AG04450 (cell line): ENCODE measurements at regions of chr6 and their contacts with region 1.

Region 1: GRCh38 chr6:126361832-126362412 is 22.0 kb downstream of the CENPW start:
- DNase-seq: no peak
- H3K4me3 ChIP-seq: no peak overlapping the region
- H3K27ac ChIP-seq: no peak overlapping the region
- H3K27me3 ChIP-seq: no peaks in the 10 kb centered on the region
- CTCF ChIP-seq: no peak

Region 2: DNA sequence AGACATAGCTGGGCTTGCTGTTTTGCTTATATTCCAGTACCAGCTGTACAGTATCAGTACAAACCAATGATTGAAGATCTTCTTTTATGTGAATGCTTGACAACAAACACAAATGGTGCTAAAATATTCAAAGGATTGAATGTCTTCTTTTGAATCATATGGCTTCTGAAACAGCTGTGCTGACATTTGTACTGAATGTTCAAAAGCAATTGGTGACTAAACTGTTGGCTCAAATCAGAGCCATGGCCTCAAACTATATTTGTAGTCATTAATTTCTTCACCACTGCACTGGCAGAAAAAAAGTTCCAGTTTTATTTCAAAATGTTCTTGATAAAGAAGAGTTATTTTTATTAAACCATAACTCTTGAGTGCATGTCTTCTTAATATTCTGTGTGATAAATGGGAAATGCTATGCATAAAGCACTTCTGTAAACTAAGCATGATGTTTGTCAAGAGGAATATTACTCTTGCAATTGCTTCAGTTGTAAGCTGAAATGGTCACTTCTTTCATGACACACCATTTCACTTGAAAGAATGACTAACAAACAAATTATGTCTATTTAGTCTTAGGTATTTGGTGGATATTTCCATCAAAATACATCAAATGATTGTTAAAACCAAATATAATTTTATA is 67.9 kb before region 1 on chr6:
- CTCF ChIA-PET with region 1: no interaction called
- POLR2A ChIA-PET with region 1: no interaction called
- DNase-seq: no peak
- H3K4me3 ChIP-seq: no peak overlapping the region
- H3K27ac ChIP-seq: no peak overlapping the region
- H3K27me3 ChIP-seq: no peaks in the 10 kb centered on the region
- CTCF ChIP-seq: no peak

Region 3: GRCh38 chr6:126339796-126340609 is 21.9 kb before region 1 on chr6 and contains the start of gene CENPW:
- CTCF ChIA-PET with region 1: interaction called, 24 read pairs
- POLR2A ChIA-PET with region 1: no interaction called
- DNase-seq: peak; percentile 57
- H3K4me3 ChIP-seq: peak within 1 kb of the TSS; percentile 97
- H3K27ac ChIP-seq: peak within 1 kb of the TSS; percentile 12
- H3K27me3 ChIP-seq: peaks cover 5% of the 10 kb centered on the region
- CTCF ChIP-seq: no peak
- polyA plus RNA-seq, gene CENPW: 6.7 and 10.6 TPM in 2 replicates

Region 4: DNA sequence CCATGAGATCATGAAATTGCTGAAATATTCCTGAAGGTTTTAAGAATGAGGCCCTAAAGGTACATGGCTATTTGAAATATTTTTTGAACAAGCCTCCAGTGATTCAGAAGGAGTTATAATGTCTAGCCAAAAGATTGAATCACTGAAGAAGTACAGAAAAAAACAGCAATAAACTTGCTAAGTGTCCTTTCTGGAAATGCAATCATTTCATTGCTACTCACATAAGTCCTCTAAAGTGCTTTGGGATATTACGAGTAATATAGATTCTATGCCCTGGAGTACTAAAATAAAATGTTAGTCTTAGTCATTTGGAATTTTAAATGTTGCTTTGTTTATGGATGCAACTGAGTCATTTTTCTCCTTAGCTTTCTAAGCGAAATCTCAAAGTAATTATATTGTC is 10.7 kb after region 1 on chr6:
- CTCF ChIA-PET with region 1: interaction called, 11 read pairs
- POLR2A ChIA-PET with region 1: no interaction called
- DNase-seq: no peak
- H3K4me3 ChIP-seq: no peak overlapping the region
- H3K27ac ChIP-seq: no peak overlapping the region
- H3K27me3 ChIP-seq: no peaks in the 10 kb centered on the region
- CTCF ChIP-seq: no peak

Region 5: GRCh38 chr6:126657561-126658175 is 295.7 kb after region 1 on chr6:
- CTCF ChIA-PET with region 1: interaction called, 12 read pairs
- POLR2A ChIA-PET with region 1: no interaction called
- DNase-seq: no peak
- H3K4me3 ChIP-seq: no peak overlapping the region
- H3K27ac ChIP-seq: no peak overlapping the region
- H3K27me3 ChIP-seq: no peaks in the 10 kb centered on the region
- CTCF ChIP-seq: peak; percentile 59

Region 6: GRCh38 chr6:127120787-127121636 is 759.1 kb after region 1 on chr6:
- CTCF ChIA-PET with region 1: interaction called, 24 read pairs
- POLR2A ChIA-PET with region 1: no interaction called
- DNase-seq: peak; percentile 29
- H3K4me3 ChIP-seq: no peak overlapping the region
- H3K27ac ChIP-seq: no peak overlapping the region
- H3K27me3 ChIP-seq: peaks cover 43% of the 10 kb centered on the region
- CTCF ChIP-seq: peak; percentile 94